CD4-positive, alpha-beta T cell (primary cell): ENCODE measurements at regions of chr1 and their contacts with region 1.

Region 1: GRCh38 chr1:114670083-114671010 is 498 bp upstream of the DENND2C start:
- DNase-seq: peak; percentile 74 to 93 (median 84)
- ATAC-seq: peak; percentile 94
- H3K4me3 ChIP-seq: peak overlapping the region; percentile 81
- H3K4me3 Mint-ChIP-seq: peak overlapping the region; percentile 99
- H3K27ac ChIP-seq: no peak overlapping the region
- H3K27ac Mint-ChIP-seq: peak overlapping the region; percentile 77
- H3K4me1 ChIP-seq: peaks cover 14% of the 10 kb centered on the region
- H3K4me1 Mint-ChIP-seq: peaks cover 12% of the 10 kb centered on the region
- H3K27me3 ChIP-seq: peaks cover 5 to 8% of the 10 kb centered on the region in 2 experiments
- H3K27me3 Mint-ChIP-seq: peaks cover 28% of the 10 kb centered on the region
- CTCF ChIP-seq: no peak

Region 2: DNA sequence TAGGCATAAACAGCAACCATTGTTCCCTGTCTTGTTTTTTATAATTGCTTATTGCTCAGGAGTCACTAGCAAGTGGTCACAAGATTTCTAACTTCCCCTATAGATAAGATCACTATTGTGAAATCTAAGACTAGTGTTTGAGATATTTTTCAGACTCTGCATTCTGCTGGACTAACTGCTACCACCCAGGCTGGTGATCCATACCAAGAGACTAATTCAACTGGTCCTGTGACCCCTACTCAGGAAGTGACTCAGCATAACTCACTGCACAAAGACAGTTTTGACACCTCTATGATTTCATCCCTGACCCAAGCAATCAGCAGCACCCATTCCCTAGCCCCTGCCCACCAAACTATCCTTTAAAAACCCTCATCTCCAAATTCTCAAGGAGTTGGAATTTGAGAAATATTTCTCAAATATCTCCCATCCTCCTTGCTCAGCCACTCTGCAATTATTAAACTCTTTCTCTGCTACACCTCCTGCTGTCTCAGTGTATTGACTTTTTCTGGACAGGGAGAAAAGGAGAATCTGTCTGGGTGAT is 212.0 kb before region 1 on chr1:
- CTCF ChIA-PET with region 1: no interaction called
- POLR2A ChIA-PET with region 1: no interaction called
- intact Hi-C with region 1: loop called in 1 of 2 experiments (anchors 10 kb)
- DNase-seq: peak in 2 of 14 experiments; percentile 30 to 46
- ATAC-seq: no peak
- H3K4me3 ChIP-seq: no peak overlapping the region
- H3K4me3 Mint-ChIP-seq: no peak overlapping the region
- H3K27ac ChIP-seq: no peak overlapping the region
- H3K27ac Mint-ChIP-seq: no peak overlapping the region
- H3K4me1 ChIP-seq: no peaks in the 10 kb centered on the region
- H3K4me1 Mint-ChIP-seq: peaks cover 31% of the 10 kb centered on the region
- H3K27me3 ChIP-seq: no peaks in the 10 kb centered on the region
- H3K27me3 Mint-ChIP-seq: no peaks in the 10 kb centered on the region
- CTCF ChIP-seq: no peak

Region 3: DNA sequence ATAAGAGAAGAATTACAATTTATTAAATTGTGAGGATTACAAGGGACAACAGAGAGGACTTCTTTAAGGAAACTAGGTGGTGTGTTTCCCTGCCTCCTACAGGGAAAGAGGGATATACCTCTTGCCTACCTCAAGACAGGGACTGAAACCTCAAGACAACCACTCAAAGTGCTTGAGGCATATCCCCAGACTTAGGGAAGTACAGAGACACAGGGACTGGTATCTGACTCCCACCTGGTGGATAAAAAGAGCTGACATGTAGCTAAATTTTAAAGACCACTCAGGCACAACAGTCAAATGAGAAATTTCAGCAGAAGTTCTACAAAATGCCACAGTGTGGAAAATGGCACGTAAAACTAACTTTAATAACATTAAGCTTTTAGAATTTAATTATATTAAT is 21.8 kb before region 1 on chr1:
- CTCF ChIA-PET with region 1: no interaction called
- POLR2A ChIA-PET with region 1: no interaction called
- intact Hi-C with region 1: no loop called
- DNase-seq: no peak
- ATAC-seq: no peak
- H3K4me3 ChIP-seq: no peak overlapping the region
- H3K4me3 Mint-ChIP-seq: no peak overlapping the region
- H3K27ac ChIP-seq: no peak overlapping the region
- H3K27ac Mint-ChIP-seq: no peak overlapping the region
- H3K4me1 ChIP-seq: no peaks in the 10 kb centered on the region
- H3K4me1 Mint-ChIP-seq: no peaks in the 10 kb centered on the region
- H3K27me3 ChIP-seq: no peaks in the 10 kb centered on the region
- H3K27me3 Mint-ChIP-seq: no peaks in the 10 kb centered on the region
- CTCF ChIP-seq: no peak

Region 4: GRCh38 chr1:114716304-114717170 is 46.2 kb after region 1 on chr1 and contains the start of gene NRAS:
- CTCF ChIA-PET with region 1: no interaction called
- POLR2A ChIA-PET with region 1: interaction called, 7 read pairs
- intact Hi-C with region 1: loop called (anchors 1 to 5 kb)
- DNase-seq: peak; percentile 87 to 97 (median 94)
- ATAC-seq: peak; percentile 96
- H3K4me3 ChIP-seq: peak within 1 kb of the TSS; percentile 72
- H3K4me3 Mint-ChIP-seq: peak within 1 kb of the TSS; percentile 91
- H3K27ac ChIP-seq: peak within 1 kb of the TSS; percentile 83 to 96
- H3K27ac Mint-ChIP-seq: peak within 1 kb of the TSS; percentile 98
- H3K4me1 ChIP-seq: peaks cover 16% of the 10 kb centered on the region
- H3K4me1 Mint-ChIP-seq: peaks cover 21% of the 10 kb centered on the region
- H3K27me3 ChIP-seq: no peaks in the 10 kb centered on the region
- H3K27me3 Mint-ChIP-seq: no peaks in the 10 kb centered on the region
- CTCF ChIP-seq: no peak
- total RNA-seq, gene NRAS: 28.9 to 30.4 TPM

Region 5: DNA sequence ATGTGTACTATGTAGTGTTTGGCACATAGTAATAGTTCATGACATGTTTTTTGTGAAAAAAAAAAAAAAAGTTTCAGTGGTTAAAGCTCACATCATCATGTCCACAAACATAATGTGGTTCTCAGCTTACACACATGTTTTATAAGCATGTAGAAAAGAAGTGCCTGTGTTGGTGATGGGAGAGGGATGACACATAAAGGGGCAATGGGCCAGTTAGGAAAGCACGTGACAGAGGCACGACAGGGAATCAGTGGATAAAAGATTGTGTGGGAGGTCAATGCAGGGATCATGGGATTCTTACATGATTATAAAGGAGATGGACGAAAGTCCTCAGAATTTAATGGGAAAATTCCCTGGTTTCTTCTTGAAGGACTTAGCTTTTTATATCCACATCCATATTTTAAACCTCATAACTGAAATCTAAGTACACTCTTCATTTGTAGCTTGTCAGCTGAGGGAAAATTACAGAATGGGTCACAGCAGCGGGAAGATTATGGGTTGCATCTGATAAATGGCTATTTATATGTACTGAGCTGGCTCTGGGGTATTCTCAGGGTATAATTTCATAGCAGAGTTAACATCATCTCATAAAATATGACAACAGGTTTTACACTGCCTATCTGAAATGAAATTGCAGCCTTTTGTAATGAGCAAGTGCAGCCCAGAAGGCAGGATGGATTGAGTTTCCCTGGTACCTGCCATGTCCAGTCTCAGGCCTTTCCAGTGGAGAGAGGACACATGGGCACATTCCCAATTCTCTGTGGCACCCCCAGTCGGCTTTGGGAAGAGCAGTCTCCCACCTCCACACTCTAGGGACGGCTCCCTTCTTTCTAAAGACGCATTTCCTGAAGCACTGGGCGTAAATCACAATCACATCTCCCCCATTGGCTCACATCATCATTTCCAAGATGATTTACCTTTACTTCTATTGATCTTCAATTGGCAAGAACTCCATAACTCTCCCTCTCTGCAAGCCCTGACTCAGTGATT is 1212.9 kb after region 1 on chr1:
- CTCF ChIA-PET with region 1: no interaction called
- POLR2A ChIA-PET with region 1: no interaction called
- intact Hi-C with region 1: no loop called
- DNase-seq: no peak
- ATAC-seq: no peak
- H3K4me3 ChIP-seq: no peak overlapping the region
- H3K4me3 Mint-ChIP-seq: no peak overlapping the region
- H3K27ac ChIP-seq: no peak overlapping the region
- H3K27ac Mint-ChIP-seq: no peak overlapping the region
- H3K4me1 ChIP-seq: no peaks in the 10 kb centered on the region
- H3K4me1 Mint-ChIP-seq: no peaks in the 10 kb centered on the region
- H3K27me3 ChIP-seq: no peaks in the 10 kb centered on the region
- H3K27me3 Mint-ChIP-seq: peaks cover 20% of the 10 kb centered on the region
- CTCF ChIP-seq: no peak